WTC11 (cell line): ENCODE measurements at regions of chr10 and their contacts with region 1.

Region 1: GRCh38 chr10:102450194-102450938 is 977 bp downstream of the C10orf95 start:
- DNase-seq: peak; percentile 80
- ATAC-seq: peak; percentile 52
- H3K4me3 Mint-ChIP-seq: peak overlapping the region; percentile 93
- H3K27ac Mint-ChIP-seq: peak overlapping the region; percentile 83
- H3K4me1 Mint-ChIP-seq: peaks cover 39% of the 10 kb centered on the region
- H3K27me3 Mint-ChIP-seq: no peaks in the 10 kb centered on the region
- CTCF ChIP-seq: no peak

Region 2: GRCh38 chr10:102120142-102120990 is 330.0 kb before region 1 on chr10 and contains the start of gene LDB1:
- CTCF ChIA-PET with region 1: no interaction called
- POLR2A ChIA-PET with region 1: no interaction called
- DNase-seq: peak; percentile 75
- ATAC-seq: peak; percentile 9
- H3K4me3 Mint-ChIP-seq: peak within 1 kb of the TSS; percentile 84
- H3K27ac Mint-ChIP-seq: peak within 1 kb of the TSS; percentile 98
- H3K4me1 Mint-ChIP-seq: peaks cover 62% of the 10 kb centered on the region
- H3K27me3 Mint-ChIP-seq: no peaks in the 10 kb centered on the region
- CTCF ChIP-seq: no peak
- total RNA-seq, gene LDB1: 89.1 to 100 TPM (median 94.2 TPM) in 3 replicates

Region 3: DNA sequence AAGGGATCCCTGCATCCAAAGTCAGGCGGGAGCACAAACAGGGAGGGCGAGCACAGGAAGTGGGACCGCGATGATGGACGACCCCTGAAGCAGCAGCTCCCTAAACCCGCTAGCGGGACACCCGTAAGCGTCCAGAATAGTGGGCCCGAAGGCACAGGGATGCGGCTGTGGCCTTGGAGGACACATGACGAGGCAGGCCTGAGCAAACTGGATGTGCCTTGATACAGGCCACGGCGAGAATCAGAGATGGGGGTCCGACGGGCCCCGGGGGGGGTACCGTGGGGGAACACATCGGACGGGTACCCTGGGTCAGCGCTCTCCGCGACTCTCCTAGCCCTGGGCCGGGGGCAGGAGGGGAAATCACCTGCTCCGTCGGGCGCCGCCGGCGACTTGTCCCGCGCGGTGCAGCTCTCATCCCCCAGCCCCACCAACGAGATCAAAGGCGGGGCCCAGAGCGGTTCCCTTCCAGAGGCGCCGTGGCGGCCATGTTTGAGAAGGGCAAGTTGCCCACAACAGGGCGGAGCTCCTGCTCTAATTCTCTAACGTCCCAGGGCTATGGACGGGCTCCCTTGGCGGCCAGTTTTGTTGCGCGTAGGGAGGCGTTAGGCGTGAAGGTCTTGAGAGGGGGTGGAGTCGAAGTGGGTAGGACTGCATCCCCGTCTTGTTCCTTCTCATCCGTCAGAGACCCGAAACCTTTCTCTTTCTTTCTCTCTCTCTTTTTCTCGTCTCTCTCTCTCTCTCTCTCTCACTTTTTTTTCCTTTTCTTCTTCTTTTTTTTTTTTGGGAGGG is 18.0 kb before region 1 on chr10 and contains the start of gene CUEDC2:
- CTCF ChIA-PET with region 1: interaction called, 13 read pairs
- POLR2A ChIA-PET with region 1: interaction called, 14 read pairs
- DNase-seq: peak; percentile 99
- ATAC-seq: peak; percentile 90
- H3K4me3 Mint-ChIP-seq: peak within 1 kb of the TSS; percentile 95
- H3K27ac Mint-ChIP-seq: peak within 1 kb of the TSS; percentile 57
- H3K4me1 Mint-ChIP-seq: peaks cover 18% of the 10 kb centered on the region
- H3K27me3 Mint-ChIP-seq: peaks cover 57% of the 10 kb centered on the region
- CTCF ChIP-seq: no peak
- total RNA-seq, gene CUEDC2: 40.2 to 69.0 TPM (median 65.8 TPM) in 3 replicates

Region 4: GRCh38 chr10:102479651-102480050 is 29.3 kb after region 1 on chr10:
- CTCF ChIA-PET with region 1: interaction called, 10 read pairs
- POLR2A ChIA-PET with region 1: no interaction called
- DNase-seq: no peak
- ATAC-seq: no peak
- H3K4me3 Mint-ChIP-seq: no peak overlapping the region
- H3K27ac Mint-ChIP-seq: no peak overlapping the region
- H3K4me1 Mint-ChIP-seq: no peaks in the 10 kb centered on the region
- H3K27me3 Mint-ChIP-seq: no peaks in the 10 kb centered on the region
- CTCF ChIP-seq: no peak

Region 5: DNA sequence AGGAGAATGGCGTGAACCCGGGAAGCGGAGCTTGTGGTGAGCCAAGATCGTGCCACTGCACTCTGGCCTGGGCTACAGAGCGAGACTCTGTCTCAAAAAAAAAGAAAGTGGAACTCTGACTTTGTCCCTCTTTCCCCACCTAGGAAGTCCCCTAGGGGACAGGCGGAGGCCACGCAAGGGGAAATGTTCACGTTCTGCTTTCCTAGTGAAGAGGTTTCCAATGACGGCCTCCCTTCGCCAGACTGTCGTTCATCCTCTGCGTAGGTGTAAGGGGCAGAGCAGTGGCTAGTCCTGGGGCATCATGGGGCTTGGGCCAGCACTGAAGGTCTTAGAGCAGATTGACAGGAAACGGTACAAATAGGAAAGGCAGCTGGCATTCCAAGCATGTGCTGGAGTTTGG is 84.0 kb after region 1 on chr10:
- CTCF ChIA-PET with region 1: no interaction called
- POLR2A ChIA-PET with region 1: no interaction called
- DNase-seq: no peak
- ATAC-seq: no peak
- H3K4me3 Mint-ChIP-seq: no peak overlapping the region
- H3K27ac Mint-ChIP-seq: no peak overlapping the region
- H3K4me1 Mint-ChIP-seq: no peaks in the 10 kb centered on the region
- H3K27me3 Mint-ChIP-seq: no peaks in the 10 kb centered on the region
- CTCF ChIP-seq: no peak

Region 6: GRCh38 chr10:102645741-102646609 is 195.6 kb after region 1 on chr10:
- CTCF ChIA-PET with region 1: no interaction called
- POLR2A ChIA-PET with region 1: no interaction called
- DNase-seq: peak; percentile 47
- ATAC-seq: no peak
- H3K4me3 Mint-ChIP-seq: peak overlapping the region; percentile 96
- H3K27ac Mint-ChIP-seq: peak overlapping the region; percentile 94
- H3K4me1 Mint-ChIP-seq: peaks cover 54% of the 10 kb centered on the region
- H3K27me3 Mint-ChIP-seq: no peaks in the 10 kb centered on the region
- CTCF ChIP-seq: no peak